PC-3 (cell line): ENCODE measurements at regions of chr6 and their contacts with region 1.

Region 1: GRCh38 chr6:55886185-55886836 is 10.9 kb upstream of the BMP5 start:
- DNase-seq: peak; percentile 69
- ATAC-seq: no peak
- H3K4me3 ChIP-seq: no peak overlapping the region
- H3K27ac ChIP-seq: no peak overlapping the region
- H3K4me1 ChIP-seq: peaks cover 31% of the 10 kb centered on the region
- H3K27me3 ChIP-seq: no peaks in the 10 kb centered on the region
- CTCF ChIP-seq: peak; percentile 64

Region 2: GRCh38 chr6:55276745-55277530 is 609.4 kb before region 1 on chr6:
- CTCF ChIA-PET with region 1: no interaction called
- POLR2A ChIA-PET with region 1: no interaction called
- intact Hi-C with region 1: loop called (anchors 5 kb)
- DNase-seq: peak; percentile 73
- ATAC-seq: peak; percentile 46; the same call in 1 of the 2 replicates
- H3K4me3 ChIP-seq: no peak overlapping the region
- H3K27ac ChIP-seq: no peak overlapping the region
- H3K4me1 ChIP-seq: no peaks in the 10 kb centered on the region
- H3K27me3 ChIP-seq: peaks cover 58% of the 10 kb centered on the region
- CTCF ChIP-seq: peak; percentile 79

Region 3: DNA sequence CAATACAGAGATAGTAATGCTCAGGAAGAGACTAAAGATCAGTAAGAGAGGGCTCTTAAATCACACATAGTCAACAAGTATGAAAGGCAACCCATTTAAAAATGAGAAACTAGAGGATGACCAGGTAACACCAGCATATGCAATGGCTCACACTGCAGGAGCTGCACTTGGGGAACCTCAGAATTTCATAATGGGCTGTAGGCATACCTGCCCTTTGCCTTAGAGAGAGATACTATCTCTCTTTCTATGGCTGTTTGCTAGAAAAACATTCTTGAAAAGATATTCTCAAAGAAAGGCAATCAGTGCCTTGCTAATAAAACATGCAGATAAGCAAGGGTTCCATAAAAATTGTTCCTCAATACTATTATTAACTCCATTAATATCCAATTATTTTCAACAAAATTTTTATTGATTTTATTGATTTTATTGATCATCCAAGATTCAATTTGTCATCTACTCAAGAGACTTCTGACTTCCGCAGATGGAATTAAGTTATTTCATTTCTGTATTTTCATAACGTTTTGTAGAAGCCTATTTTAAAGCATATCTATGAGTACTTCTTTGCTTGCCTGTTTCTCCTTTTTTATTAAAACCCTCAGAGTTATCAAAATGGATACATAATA is 340.4 kb before region 1 on chr6:
- CTCF ChIA-PET with region 1: no interaction called
- POLR2A ChIA-PET with region 1: no interaction called
- intact Hi-C with region 1: loop called (anchors 5 kb)
- DNase-seq: no peak
- ATAC-seq: no peak
- H3K4me3 ChIP-seq: no peak overlapping the region
- H3K27ac ChIP-seq: no peak overlapping the region
- H3K4me1 ChIP-seq: no peaks in the 10 kb centered on the region
- H3K27me3 ChIP-seq: no peaks in the 10 kb centered on the region
- CTCF ChIP-seq: no peak

Region 4: DNA sequence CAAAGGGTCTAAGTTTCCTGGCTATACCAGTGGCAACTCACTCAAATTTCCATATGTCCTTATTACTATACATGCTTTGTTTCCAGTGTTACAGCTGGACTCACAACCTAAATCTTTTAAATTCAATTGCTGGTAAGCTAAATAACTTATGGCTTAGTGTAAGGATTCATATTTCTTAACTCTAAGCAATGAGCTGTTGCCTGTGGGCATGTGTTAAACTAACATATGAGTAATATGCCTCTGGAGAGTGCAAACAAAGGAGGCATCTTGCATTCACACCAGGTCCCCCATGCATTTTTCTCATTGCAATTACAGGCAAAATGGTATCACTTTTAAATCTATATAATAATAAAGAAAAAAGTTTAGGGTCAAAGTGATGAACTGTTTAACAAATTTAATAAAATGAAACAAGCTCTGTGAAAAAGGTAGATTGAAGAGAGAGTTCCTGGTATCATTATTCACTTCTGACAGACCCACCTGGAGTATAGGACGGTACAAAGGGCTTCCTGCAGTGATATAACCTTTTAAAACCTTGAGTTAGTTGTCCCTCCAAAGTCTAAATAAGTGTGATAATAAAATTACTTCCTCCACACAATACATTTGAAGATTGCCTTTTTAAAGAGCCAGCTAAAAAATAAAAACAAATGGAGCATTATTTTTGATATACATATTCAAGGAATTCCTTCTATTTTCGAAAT is 249.8 kb before region 1 on chr6:
- CTCF ChIA-PET with region 1: interaction called, 3 read pairs
- POLR2A ChIA-PET with region 1: no interaction called
- intact Hi-C with region 1: loop called (anchors 5 kb)
- DNase-seq: peak; percentile 96
- ATAC-seq: peak; percentile 99
- H3K4me3 ChIP-seq: peak overlapping the region; percentile 2; the same call in 1 of the 2 replicates
- H3K27ac ChIP-seq: peak overlapping the region; percentile 86
- H3K4me1 ChIP-seq: peaks cover 28% of the 10 kb centered on the region
- H3K27me3 ChIP-seq: no peaks in the 10 kb centered on the region
- CTCF ChIP-seq: no peak

Region 5: GRCh38 chr6:55794136-55794812 is 92.0 kb before region 1 on chr6:
- CTCF ChIA-PET with region 1: no interaction called
- POLR2A ChIA-PET with region 1: no interaction called
- intact Hi-C with region 1: loop called (anchors 5 kb)
- DNase-seq: peak; percentile 78
- ATAC-seq: peak; percentile 72
- H3K4me3 ChIP-seq: no peak overlapping the region
- H3K27ac ChIP-seq: peak overlapping the region; percentile 65
- H3K4me1 ChIP-seq: peaks cover 27% of the 10 kb centered on the region
- H3K27me3 ChIP-seq: no peaks in the 10 kb centered on the region
- CTCF ChIP-seq: no peak

Region 6: GRCh38 chr6:55868771-55869479 is 17.4 kb before region 1 on chr6:
- CTCF ChIA-PET with region 1: no interaction called
- POLR2A ChIA-PET with region 1: no interaction called
- intact Hi-C with region 1: loop called (anchors 1 kb)
- DNase-seq: peak; percentile 98
- ATAC-seq: peak; percentile 93
- H3K4me3 ChIP-seq: peak overlapping the region; percentile 30; the same call in 1 of the 2 replicates
- H3K27ac ChIP-seq: peak overlapping the region; percentile 97
- H3K4me1 ChIP-seq: peaks cover 60% of the 10 kb centered on the region
- H3K27me3 ChIP-seq: no peaks in the 10 kb centered on the region
- CTCF ChIP-seq: no peak